ENCODE measurements at regions of chr19 and their contacts with region 1.

Region 1: GRCh38 chr19:34894780-34895179 is 31.9 kb upstream of the ZNF30 start:
- DNase-seq: no peak
- H3K4me3 ChIP-seq: no peak overlapping the region
- H3K27ac ChIP-seq: no peak overlapping the region
- H3K4me1 ChIP-seq: no peaks in the 10 kb centered on the region
- H3K27me3 ChIP-seq: no peaks in the 10 kb centered on the region
- CTCF ChIP-seq: no peak

Region 2: DNA sequence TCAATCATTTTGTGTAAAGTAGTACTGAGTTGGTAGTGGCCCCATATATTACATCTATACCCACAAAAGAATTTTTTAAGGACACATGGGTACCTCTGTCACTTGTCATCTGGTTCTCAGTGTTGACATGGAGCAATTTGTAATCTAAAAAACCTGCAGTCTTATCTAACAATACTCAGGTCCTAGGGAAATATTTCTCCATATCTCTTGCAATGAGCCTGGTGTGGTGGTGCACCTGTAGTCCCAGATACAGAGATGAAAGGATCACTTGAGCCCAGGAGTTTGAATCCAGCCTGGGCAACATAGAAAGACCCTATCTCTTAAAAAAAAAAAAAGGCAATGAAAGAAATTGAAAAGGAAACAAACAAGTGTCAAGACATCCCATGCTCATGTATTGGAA is 38.7 kb before region 1 on chr19:
- CTCF ChIA-PET with region 1: no interaction called
- dilution Hi-C with region 1: loop called (anchors 5 kb)
- in situ Hi-C with region 1: no loop called
- intact Hi-C with region 1: no loop called
- DNase-seq: no peak
- H3K4me3 ChIP-seq: no peak overlapping the region
- H3K27ac ChIP-seq: no peak overlapping the region
- H3K4me1 ChIP-seq: no peaks in the 10 kb centered on the region
- H3K27me3 ChIP-seq: no peaks in the 10 kb centered on the region
- CTCF ChIP-seq: no peak